Prostate gland (tissue), 2 donors: ENCODE measurements at regions of chr3 and their contacts with region 1.

Region 1: DNA sequence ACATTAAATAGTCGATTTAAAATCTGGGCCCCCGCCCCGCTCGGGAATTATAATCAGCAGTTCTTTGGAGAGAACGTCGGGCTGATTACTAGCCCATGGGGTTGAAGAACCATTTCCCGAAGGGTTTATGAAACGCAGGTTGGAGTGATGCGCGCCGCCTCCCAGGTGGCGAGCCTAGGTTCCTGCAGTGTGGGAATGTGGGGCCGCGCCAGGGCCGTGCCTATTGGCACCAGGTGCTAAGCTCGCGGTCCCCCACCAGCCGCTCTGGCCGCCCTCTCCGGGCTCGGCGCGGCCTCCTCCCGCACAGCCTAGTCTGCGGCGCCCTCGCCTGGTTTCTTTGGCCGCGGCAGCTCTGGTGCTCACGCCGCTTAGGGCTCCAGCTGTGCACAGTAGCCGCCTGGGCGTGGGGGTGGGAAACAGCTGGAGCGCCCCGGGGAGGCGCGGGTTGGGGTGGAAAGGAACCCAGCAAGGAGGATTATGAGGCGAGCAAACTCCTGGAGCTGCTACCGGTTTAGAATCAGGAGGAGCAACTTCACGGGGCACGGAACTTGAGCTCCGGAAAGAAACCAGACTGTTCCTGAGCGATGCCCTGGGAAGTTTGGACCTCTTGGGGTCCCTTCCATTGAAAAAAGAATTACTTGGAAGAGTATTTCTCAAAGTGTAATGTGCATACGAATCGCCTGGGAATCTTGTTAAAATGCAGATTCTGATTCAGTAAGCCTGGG is 5.6 kb upstream of the MECOM start:
- DNase-seq: peak; percentile 75
- H3K4me3 ChIP-seq: peak overlapping the region; percentile 20 to 27
- H3K27ac ChIP-seq: peak overlapping the region in 1 of 2 donors; percentile 7
- H3K4me1 ChIP-seq: no peaks in the 10 kb centered on the region
- H3K27me3 ChIP-seq: peaks cover 8% of the 10 kb centered on the region
- CTCF ChIP-seq: peak; percentile 41 to 91 (median 62)
- POLR2A ChIP-seq: peak; percentile 24

Region 2: DNA sequence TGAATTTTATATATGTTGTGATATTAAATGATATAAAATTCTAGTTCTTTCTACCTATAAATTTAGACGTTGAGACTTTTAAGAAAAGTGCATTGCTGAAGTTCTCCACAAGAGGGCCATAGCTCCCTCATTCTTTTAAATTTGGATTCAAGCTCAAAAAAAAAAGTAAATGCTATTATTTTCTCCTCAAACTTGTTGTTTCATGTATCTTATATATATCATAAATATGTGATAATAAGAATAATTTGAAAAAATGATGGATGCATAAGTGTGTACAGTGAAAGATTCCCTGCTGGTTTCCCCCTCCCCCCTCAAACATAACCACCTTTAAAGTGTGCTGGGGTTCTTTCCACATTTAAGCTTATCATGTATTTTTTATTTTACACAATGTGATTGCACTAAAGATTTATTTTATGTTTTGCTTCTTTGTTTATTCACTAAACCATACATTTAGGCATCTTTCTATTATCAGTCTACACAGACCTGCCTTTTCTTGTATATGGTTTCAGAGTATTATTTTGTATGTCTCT is 804.0 kb before region 1 on chr3:
- intact Hi-C with region 1: loop called (anchors 10 kb)
- DNase-seq: no peak
- H3K4me3 ChIP-seq: no peak overlapping the region
- H3K27ac ChIP-seq: no peak overlapping the region
- H3K4me1 ChIP-seq: no peaks in the 10 kb centered on the region
- H3K27me3 ChIP-seq: no peaks in the 10 kb centered on the region
- CTCF ChIP-seq: peak; percentile 25 to 71 (median 62)
- POLR2A ChIP-seq: no peak

Region 3: GRCh38 chr3:168952551-168952950 is 716.6 kb before region 1 on chr3:
- intact Hi-C with region 1: loop called (anchors 10 kb)
- DNase-seq: no peak
- H3K4me3 ChIP-seq: no peak overlapping the region
- H3K27ac ChIP-seq: no peak overlapping the region
- H3K4me1 ChIP-seq: no peaks in the 10 kb centered on the region
- H3K27me3 ChIP-seq: no peaks in the 10 kb centered on the region
- CTCF ChIP-seq: peak in 2 of 4 experiments; percentile 22 to 34
- POLR2A ChIP-seq: no peak

Region 4: GRCh38 chr3:169041677-169042171 is 627.4 kb before region 1 on chr3:
- intact Hi-C with region 1: loop called (anchors 5 kb)
- DNase-seq: no peak
- H3K4me3 ChIP-seq: no peak overlapping the region
- H3K27ac ChIP-seq: no peak overlapping the region
- H3K4me1 ChIP-seq: no peaks in the 10 kb centered on the region
- H3K27me3 ChIP-seq: no peaks in the 10 kb centered on the region
- CTCF ChIP-seq: peak in 3 of 4 experiments; percentile 41 to 60 (median 60)
- POLR2A ChIP-seq: no peak

Region 5: DNA sequence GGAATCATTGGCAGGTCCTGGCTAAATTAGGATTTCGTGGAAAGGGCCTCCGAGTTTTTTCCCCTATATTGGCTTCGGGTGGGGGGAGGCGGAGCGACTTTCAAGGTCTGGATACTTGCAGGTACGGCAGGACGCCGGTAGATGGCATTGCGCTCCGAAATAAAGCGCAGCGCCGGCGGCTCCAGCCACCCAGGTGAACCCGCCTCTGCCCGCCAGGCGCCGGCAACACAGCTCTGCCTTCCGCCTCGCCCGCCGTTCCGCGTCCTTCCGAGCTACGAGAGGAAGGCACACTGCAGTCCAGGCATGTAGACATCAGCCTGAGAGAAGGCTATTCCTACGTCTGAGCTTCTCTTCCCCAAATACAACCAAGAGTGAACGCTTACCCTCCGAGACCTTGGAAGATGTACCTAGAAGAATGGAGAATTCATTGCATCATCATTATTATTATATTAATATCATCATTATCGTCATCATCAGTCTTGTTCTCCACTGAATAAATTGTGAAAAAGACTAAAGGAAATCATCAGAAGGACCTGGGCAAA is 519.7 kb before region 1 on chr3:
- intact Hi-C with region 1: loop called (anchors 5 kb)
- DNase-seq: peak; percentile 85
- H3K4me3 ChIP-seq: no peak overlapping the region
- H3K27ac ChIP-seq: no peak overlapping the region
- H3K4me1 ChIP-seq: no peaks in the 10 kb centered on the region
- H3K27me3 ChIP-seq: no peaks in the 10 kb centered on the region
- CTCF ChIP-seq: peak; percentile 50 to 95 (median 90)
- POLR2A ChIP-seq: no peak

Region 6: DNA sequence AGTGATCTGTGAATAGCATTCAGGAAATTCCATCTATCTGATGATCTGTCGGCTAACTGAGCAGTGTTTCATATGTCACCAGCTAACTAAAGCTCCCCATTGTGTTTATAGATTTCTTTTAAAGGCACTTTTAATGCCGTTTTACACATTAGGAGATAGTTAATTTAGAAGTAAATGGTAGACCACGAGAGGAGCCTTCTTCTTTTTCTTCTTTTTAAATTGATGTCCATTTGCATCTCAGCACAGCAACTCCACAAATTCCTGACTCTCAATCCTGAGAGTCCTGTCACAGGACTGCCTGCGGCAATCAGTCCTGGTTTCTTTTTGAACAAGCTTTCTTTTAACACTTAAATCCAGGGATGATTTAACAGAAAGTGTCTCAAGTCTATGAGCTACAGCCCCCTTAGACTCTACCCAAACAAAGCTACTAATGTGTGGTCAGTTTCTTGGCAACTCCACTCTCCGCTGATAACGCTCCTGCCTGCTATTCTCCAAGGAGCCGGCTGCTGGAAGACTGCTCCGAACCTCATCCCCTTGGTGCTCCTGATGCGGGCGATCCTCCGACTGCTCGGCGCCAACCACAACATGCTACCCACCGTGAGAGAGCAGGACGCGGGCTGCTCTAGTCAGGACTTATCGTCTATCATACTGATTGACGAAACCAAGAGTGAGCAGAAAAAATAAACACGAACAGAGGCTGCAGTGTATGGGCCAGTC is 427.0 kb before region 1 on chr3:
- intact Hi-C with region 1: loop called (anchors 10 kb)
- DNase-seq: no peak
- H3K4me3 ChIP-seq: no peak overlapping the region
- H3K27ac ChIP-seq: no peak overlapping the region
- H3K4me1 ChIP-seq: no peaks in the 10 kb centered on the region
- H3K27me3 ChIP-seq: no peaks in the 10 kb centered on the region
- CTCF ChIP-seq: no peak
- POLR2A ChIP-seq: no peak

Region 7: DNA sequence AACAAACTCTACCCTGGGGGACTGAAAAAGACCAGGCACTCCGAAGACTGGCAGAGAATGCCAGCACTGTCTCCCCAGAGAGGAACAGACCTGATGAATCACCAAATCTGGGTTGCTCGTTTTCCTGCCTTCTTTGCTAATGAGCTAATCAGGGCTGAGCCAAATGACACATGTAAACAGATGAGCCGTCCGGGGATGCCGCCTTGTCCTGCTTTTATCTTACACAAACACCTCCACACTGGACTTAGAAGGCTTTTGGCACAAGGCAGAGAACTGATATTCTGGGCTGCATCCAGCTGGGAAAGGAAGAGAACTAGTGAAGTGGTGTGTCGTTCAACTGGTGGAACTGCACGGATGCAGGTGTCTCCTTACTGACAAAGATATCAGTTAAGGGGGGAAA is 93.7 kb before region 1 on chr3:
- intact Hi-C with region 1: no loop called
- DNase-seq: no peak
- H3K4me3 ChIP-seq: no peak overlapping the region
- H3K27ac ChIP-seq: no peak overlapping the region
- H3K4me1 ChIP-seq: no peaks in the 10 kb centered on the region
- H3K27me3 ChIP-seq: no peaks in the 10 kb centered on the region
- CTCF ChIP-seq: no peak
- POLR2A ChIP-seq: no peak